ENCODE measurements at regions of chr4 and their contacts with region 1.

Region 1: DNA sequence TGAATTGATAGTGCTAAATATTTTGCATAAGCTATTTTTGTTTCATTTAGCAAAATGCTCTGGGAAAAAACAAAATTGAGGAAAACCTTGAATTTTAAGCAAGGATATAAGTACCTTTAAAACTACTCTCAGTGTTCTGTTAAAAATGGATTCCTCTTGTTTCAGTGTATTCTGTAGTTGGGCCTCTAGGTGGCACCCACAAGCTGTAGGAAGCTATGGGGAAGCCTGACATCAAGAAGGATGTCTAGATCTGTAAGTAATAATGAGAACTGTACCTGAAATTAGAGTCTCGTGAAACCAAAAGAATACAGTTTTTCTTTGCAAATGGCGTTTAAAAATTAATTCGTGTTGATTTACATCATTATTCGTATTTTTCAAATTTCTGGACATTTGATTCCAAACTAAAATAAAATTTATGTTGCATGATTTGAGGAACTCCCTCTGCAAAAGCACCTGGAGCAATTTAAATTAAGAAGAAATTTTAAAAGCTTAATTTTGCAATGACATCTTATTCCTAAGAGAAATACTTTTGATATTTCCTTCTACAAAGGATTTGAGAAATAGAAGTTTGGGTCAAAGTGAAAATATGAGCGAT is 51.2 kb downstream of the TMPRSS11E start:
- DNase-seq: peak; percentile 87
- H3K4me3 Mint-ChIP-seq: no peak overlapping the region
- H3K27ac Mint-ChIP-seq: no peak overlapping the region
- H3K4me1 Mint-ChIP-seq: peaks cover 2% of the 10 kb centered on the region
- H3K27me3 Mint-ChIP-seq: no peaks in the 10 kb centered on the region

Region 2: DNA sequence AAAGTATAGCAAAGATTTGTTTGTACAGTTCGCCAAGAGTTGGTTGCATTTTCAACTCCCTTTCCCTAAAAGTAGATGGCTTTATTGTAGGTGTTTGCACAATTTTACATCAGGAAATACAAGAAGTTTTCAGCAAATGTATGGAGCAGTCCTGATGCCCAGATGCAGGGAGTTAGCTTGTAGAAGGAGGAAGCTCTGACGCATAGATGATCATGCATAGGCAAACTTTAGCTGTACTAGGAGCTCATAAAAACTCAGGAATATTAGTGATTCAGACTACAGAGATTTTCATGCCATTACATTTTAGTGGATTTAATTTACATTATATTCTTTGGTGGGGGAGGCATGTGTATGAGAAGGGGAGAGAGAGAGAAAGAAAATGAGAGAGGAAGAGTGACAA is 677.6 kb before region 1 on chr4:
- intact Hi-C with region 1: no loop called
- DNase-seq: no peak
- H3K4me3 Mint-ChIP-seq: no peak overlapping the region
- H3K27ac Mint-ChIP-seq: no peak overlapping the region
- H3K4me1 Mint-ChIP-seq: no peaks in the 10 kb centered on the region
- H3K27me3 Mint-ChIP-seq: no peaks in the 10 kb centered on the region

Region 3: GRCh38 chr4:68748181-68748991 is 249.9 kb after region 1 on chr4:
- intact Hi-C with region 1: no loop called
- DNase-seq: no peak
- H3K4me3 Mint-ChIP-seq: no peak overlapping the region
- H3K27ac Mint-ChIP-seq: no peak overlapping the region
- H3K4me1 Mint-ChIP-seq: no peaks in the 10 kb centered on the region
- H3K27me3 Mint-ChIP-seq: no peaks in the 10 kb centered on the region

Region 4: GRCh38 chr4:68904786-68905185 is 406.3 kb after region 1 on chr4:
- intact Hi-C with region 1: no loop called
- DNase-seq: no peak
- H3K4me3 Mint-ChIP-seq: no peak overlapping the region
- H3K27ac Mint-ChIP-seq: no peak overlapping the region
- H3K4me1 Mint-ChIP-seq: no peaks in the 10 kb centered on the region
- H3K27me3 Mint-ChIP-seq: no peaks in the 10 kb centered on the region

Region 5: DNA sequence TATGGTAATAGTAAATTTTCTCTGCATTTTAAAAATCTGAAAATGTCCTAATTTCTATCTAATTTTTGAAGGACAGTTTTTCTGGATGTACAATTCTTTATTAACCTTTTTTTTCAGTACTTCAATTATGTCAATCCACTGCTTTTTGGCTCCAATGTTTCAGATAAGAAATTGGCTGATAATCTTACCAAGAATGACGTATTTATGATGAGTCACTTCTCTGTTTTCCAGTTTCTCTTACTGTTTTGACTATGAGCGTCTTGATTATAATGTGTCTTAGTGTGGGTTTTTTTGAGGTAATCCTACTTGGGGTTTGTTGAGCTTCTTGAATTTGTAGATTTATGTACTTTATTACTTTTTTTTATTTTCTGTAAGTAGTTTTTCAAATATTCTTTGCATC is 668.8 kb after region 1 on chr4:
- intact Hi-C with region 1: loop called (anchors 2 kb)
- DNase-seq: no peak
- H3K4me3 Mint-ChIP-seq: no peak overlapping the region
- H3K27ac Mint-ChIP-seq: no peak overlapping the region
- H3K4me1 Mint-ChIP-seq: no peaks in the 10 kb centered on the region
- H3K27me3 Mint-ChIP-seq: no peaks in the 10 kb centered on the region

Region 6: GRCh38 chr4:69876071-69876470 is 1377.6 kb after region 1 on chr4:
- intact Hi-C with region 1: loop called (anchors 5 kb)
- DNase-seq: no peak
- H3K4me3 Mint-ChIP-seq: no peak overlapping the region
- H3K27ac Mint-ChIP-seq: no peak overlapping the region
- H3K4me1 Mint-ChIP-seq: no peaks in the 10 kb centered on the region
- H3K27me3 Mint-ChIP-seq: peaks cover 8% of the 10 kb centered on the region

Measured in activated CD4-positive, alpha-beta T cell treated with anti-CD3 and anti-CD28 coated beads, Interleukin-2, amount 10 ng/mL, durations not matched to agents 24 days and 14 days (primary cell).